ENCODE measurements at regions of chr18 and their contacts with region 1.

Region 1: GRCh38 chr18:3889803-3890202 is 439.8 kb downstream of the TGIF1 start:
- DNase-seq: no peak
- H3K4me3 Mint-ChIP-seq: no peak overlapping the region
- H3K27ac Mint-ChIP-seq: no peak overlapping the region
- H3K4me1 Mint-ChIP-seq: no peaks in the 10 kb centered on the region
- H3K27me3 Mint-ChIP-seq: peaks cover 6% of the 10 kb centered on the region

Region 2: DNA sequence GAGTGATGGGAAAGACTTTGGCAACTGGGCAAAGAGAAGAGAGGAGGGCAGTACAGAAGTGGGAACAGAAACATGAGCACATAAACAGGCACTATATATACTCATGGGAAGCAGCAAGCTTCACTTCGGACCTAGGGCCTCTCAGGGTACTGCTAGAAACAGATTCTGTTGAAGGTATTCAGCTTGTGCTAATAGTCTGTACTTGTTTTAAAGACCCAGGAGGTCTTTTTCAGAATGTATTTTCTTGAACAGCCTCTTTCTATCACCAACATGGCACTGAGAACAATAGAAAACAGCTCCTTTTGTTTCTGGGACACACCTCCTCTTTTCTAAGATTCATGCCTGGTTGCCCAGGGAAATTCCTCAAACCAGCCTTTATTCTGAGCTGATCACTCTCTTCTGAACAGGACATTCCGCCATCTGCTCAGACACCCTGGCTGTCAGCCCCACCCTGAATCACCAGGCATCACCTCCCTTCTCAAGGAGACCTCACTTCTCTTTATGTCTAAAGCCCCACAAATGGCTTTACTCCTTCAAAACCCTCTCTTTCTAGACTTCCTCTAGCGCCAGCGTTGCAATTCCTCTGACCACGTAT is 50.2 kb before region 1 on chr18:
- CTCF ChIA-PET with region 1: no interaction called
- POLR2A ChIA-PET with region 1: no interaction called
- intact Hi-C with region 1: loop called (anchors 10 kb)
- DNase-seq: no peak
- H3K4me3 Mint-ChIP-seq: no peak overlapping the region
- H3K27ac Mint-ChIP-seq: no peak overlapping the region
- H3K4me1 Mint-ChIP-seq: no peaks in the 10 kb centered on the region
- H3K27me3 Mint-ChIP-seq: peaks cover 5% of the 10 kb centered on the region

Measured in activated CD4-positive, alpha-beta memory T cell treated with anti-CD3 and anti-CD28 coated beads for 36 hours (primary cell).